Activated CD8-positive, alpha-beta T cell treated with anti-CD3 and anti-CD28 coated beads for 36 hours (primary cell): ENCODE measurements at regions of chr2 and their contacts with region 1.

Region 1: DNA sequence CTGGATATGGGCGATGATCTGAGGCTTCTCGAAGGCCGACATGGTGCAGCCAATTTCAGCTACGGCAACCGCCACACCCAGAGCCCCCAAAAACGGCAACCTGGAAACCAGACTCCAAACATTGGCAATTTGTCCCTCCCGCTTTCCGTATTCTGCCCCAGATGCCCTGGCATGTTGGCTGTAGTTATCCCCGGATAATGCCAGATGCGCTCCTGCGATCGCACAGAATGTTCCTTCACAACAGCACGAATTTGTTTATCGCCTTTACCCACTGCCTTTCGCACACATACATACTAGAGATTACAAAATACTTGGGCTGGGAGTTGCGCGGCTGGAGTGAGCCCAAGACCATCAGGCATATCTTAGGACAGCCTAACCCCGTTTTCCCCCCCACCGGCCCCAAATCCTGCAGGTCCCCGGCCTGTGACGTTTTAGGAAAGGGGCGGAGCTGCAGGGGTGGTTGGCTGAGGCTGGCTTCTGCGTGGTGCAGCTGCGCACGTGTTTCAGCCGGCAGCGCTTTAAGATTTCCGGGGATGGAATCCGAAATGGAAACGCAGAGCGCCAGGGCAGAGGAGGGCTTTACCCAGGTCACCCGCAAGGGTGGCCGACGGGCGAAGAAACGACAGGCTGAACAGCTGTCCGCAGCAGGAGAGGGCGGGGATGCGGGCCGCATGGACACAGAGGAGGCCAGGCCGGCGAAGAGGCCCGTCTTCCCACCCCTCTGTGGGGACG is at the start of gene PNO1:
- DNase-seq: peak; percentile 98
- ATAC-seq: peak; percentile 96
- H3K4me3 Mint-ChIP-seq: peak within 1 kb of the TSS; percentile 97
- H3K27ac Mint-ChIP-seq: peak within 1 kb of the TSS; percentile 100
- H3K4me1 Mint-ChIP-seq: peaks cover 46% of the 10 kb centered on the region
- H3K27me3 Mint-ChIP-seq: no peaks in the 10 kb centered on the region
- CTCF ChIP-seq: no peak
- total RNA-seq, gene PNO1: 25.1 to 26.2 TPM

Region 2: GRCh38 chr2:68169297-68169696 is 11.7 kb after region 1 on chr2:
- CTCF ChIA-PET with region 1: interaction called, 22 read pairs
- POLR2A ChIA-PET with region 1: interaction called, 15 read pairs
- intact Hi-C with region 1: no loop called
- DNase-seq: no peak
- ATAC-seq: no peak
- H3K4me3 Mint-ChIP-seq: no peak overlapping the region
- H3K27ac Mint-ChIP-seq: no peak overlapping the region
- H3K4me1 Mint-ChIP-seq: peaks cover 11% of the 10 kb centered on the region
- H3K27me3 Mint-ChIP-seq: no peaks in the 10 kb centered on the region
- CTCF ChIP-seq: no peak

Region 3: DNA sequence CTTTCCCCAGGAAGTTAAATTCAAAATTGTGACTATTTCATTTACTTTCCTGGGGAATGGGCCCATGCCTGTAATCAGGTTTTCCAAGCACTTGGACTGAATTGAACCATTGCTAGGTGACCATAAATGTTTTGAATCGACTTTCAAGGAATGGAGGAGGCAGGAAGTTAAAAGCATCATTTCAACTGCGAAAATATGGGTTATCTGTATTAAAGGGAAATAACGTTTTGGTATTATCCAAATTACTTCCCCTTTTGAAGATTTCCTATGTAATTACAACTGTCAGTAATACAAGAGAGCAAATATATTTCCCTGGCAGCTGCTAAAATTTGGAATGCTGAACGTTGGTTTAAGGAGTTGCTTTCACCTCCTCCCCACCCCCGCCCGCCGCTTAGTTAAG is 19.1 kb after region 1 on chr2:
- CTCF ChIA-PET with region 1: no interaction called
- POLR2A ChIA-PET with region 1: interaction called, 12 read pairs
- intact Hi-C with region 1: no loop called
- DNase-seq: no peak
- ATAC-seq: no peak
- H3K4me3 Mint-ChIP-seq: no peak overlapping the region
- H3K27ac Mint-ChIP-seq: no peak overlapping the region
- H3K4me1 Mint-ChIP-seq: peaks cover 20% of the 10 kb centered on the region
- H3K27me3 Mint-ChIP-seq: no peaks in the 10 kb centered on the region
- CTCF ChIP-seq: no peak

Region 4: DNA sequence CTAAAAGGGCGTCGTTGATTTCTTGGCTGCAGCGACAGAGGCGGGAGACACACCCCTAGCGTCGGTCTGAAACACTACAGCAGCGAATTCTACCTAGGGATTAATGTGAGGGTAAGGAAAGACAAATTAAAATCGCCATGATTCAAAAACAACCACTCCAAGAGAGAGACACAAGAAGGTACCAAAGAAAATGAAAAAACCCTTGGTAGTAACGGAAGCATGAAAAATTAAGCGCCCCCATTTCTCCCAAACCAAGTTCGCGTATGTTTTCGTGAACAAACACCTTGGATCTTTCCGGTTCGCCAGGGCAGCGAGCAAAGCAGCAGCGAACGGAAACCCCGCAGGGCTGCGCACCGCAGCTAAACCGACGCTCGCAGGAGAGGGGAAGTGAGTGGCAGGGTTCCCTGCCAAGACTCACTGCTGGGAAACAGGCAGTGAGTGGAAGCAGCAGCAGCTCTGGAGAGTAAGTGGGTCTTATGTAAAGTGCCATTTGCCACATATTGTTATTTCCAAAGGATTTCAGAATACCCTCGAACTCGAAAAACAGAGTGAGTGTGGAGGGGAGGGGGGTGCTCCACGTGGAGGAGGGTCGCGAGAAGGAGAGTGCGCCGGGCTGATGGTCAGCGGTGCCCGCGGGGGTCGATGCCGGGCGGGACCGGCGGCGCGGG is 93.8 kb after region 1 on chr2:
- CTCF ChIA-PET with region 1: interaction called, 3 read pairs
- POLR2A ChIA-PET with region 1: interaction called, 7 read pairs
- intact Hi-C with region 1: loop called (anchors 5 kb)
- DNase-seq: peak; percentile 82
- ATAC-seq: peak; percentile 70
- H3K4me3 Mint-ChIP-seq: peak overlapping the region; percentile 87
- H3K27ac Mint-ChIP-seq: peak overlapping the region; percentile 98
- H3K4me1 Mint-ChIP-seq: peaks cover 31% of the 10 kb centered on the region
- H3K27me3 Mint-ChIP-seq: no peaks in the 10 kb centered on the region
- CTCF ChIP-seq: peak; percentile 64

Region 5: DNA sequence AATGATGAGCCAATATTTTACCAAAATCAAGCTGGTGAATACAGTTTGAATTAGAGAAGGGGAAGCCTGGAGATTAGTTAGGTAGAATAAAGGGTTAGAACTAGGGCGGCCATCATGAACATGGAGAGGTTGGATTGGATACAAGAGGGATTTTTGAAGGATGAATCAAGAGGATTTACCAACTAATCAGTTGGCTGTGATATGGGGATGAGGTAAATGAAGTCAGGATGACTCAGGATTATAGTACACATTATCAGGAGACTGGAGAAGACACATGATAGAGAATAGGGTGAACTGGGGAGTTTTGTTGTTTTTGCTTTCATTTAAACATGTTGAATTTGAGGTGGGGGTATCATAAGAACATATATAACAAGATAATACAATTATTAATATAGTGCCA is 412.0 kb after region 1 on chr2:
- CTCF ChIA-PET with region 1: no interaction called
- POLR2A ChIA-PET with region 1: no interaction called
- intact Hi-C with region 1: no loop called
- DNase-seq: no peak
- ATAC-seq: no peak
- H3K4me3 Mint-ChIP-seq: no peak overlapping the region
- H3K27ac Mint-ChIP-seq: no peak overlapping the region
- H3K4me1 Mint-ChIP-seq: no peaks in the 10 kb centered on the region
- H3K27me3 Mint-ChIP-seq: no peaks in the 10 kb centered on the region
- CTCF ChIP-seq: no peak